K562 (cell line): ENCODE measurements at regions of chr7 and their contacts with region 1.

Region 1: GRCh38 chr7:75945297-75946168 is 30.6 kb downstream of the POR start:
- DNase-seq: peak; percentile 35 to 61 (median 52)
- ATAC-seq: peak; percentile 98
- H3K4me3 ChIP-seq: no peak overlapping the region
- H3K27ac ChIP-seq: no peak overlapping the region
- H3K4me1 ChIP-seq: peaks cover 0 to 20% of the 10 kb centered on the region in 2 experiments; a peak in 4 of 5 replicates
- H3K27me3 ChIP-seq: no peaks in the 10 kb centered on the region
- CTCF ChIP-seq: peak; percentile 38 to 47 (median 42); a peak in 5 of 6 replicates
- EP300 ChIP-seq: peak; percentile 21; the same call in 1 of the 2 replicates
- POLR2A ChIP-seq: no peak
- RAD21 ChIP-seq: peak; percentile 22 to 66; a peak in 3 of 4 replicates

Region 2: GRCh38 chr7:75994388-75995051 is 49.0 kb after region 1 on chr7 and contains the start of gene TMEM120A:
- CTCF ChIA-PET with region 1: no interaction called
- POLR2A ChIA-PET with region 1: no interaction called
- in situ Hi-C with region 1: no loop called
- intact Hi-C with region 1: no loop called
- DNase-seq: peak; percentile 97 to 100 (median 100)
- ATAC-seq: peak; percentile 95
- H3K4me3 ChIP-seq: peak within 1 kb of the TSS; percentile 77
- H3K27ac ChIP-seq: peak within 1 kb of the TSS; percentile 54
- H3K4me1 ChIP-seq: peaks cover 33 to 55% of the 10 kb centered on the region in 2 experiments
- H3K27me3 ChIP-seq: no peaks in the 10 kb centered on the region
- CTCF ChIP-seq: peak in 2 of 3 experiments; percentile 15 to 55; a peak in 1 of 6 replicates
- EP300 ChIP-seq: no peak
- POLR2A ChIP-seq: peak; percentile 82
- RAD21 ChIP-seq: 0 out of 4 replicates have a peak, but pooled peaks of 1 of the 2 experiments have one; percentile 1
- polyA plus RNA-seq, gene TMEM120A: 2.3 to 8.3 TPM

Region 3: GRCh38 chr7:76020031-76020714 is 74.6 kb after region 1 on chr7:
- CTCF ChIA-PET with region 1: interaction called, 3 read pairs
- POLR2A ChIA-PET with region 1: no interaction called
- in situ Hi-C with region 1: no loop called
- intact Hi-C with region 1: loop called (anchors 5 kb)
- DNase-seq: peak; percentile 85 to 88 (median 86)
- ATAC-seq: peak; percentile 97
- H3K4me3 ChIP-seq: no peak overlapping the region
- H3K27ac ChIP-seq: no peak overlapping the region
- H3K4me1 ChIP-seq: peaks cover 0 to 4% of the 10 kb centered on the region in 2 experiments; a peak in 2 of 5 replicates
- H3K27me3 ChIP-seq: no peaks in the 10 kb centered on the region
- CTCF ChIP-seq: peak; percentile 91 to 99 (median 96)
- EP300 ChIP-seq: no peak
- POLR2A ChIP-seq: no peak
- RAD21 ChIP-seq: peak; percentile 96 to 98